AG04450 (cell line): ENCODE measurements at regions of chr4 and their contacts with region 1.

Region 1: GRCh38 chr4:16505726-16506125 is 279.5 kb upstream of the TAPT1 start:
- DNase-seq: no peak
- H3K4me3 ChIP-seq: no peak overlapping the region
- H3K27ac ChIP-seq: no peak overlapping the region
- H3K27me3 ChIP-seq: no peaks in the 10 kb centered on the region
- CTCF ChIP-seq: peak; percentile 42

Region 2: GRCh38 chr4:16516796-16517439 is 11.2 kb after region 1 on chr4:
- CTCF ChIA-PET with region 1: interaction called, 10 read pairs
- POLR2A ChIA-PET with region 1: no interaction called
- DNase-seq: peak; percentile 58
- H3K4me3 ChIP-seq: no peak overlapping the region
- H3K27ac ChIP-seq: no peak overlapping the region
- H3K27me3 ChIP-seq: no peaks in the 10 kb centered on the region
- CTCF ChIP-seq: peak; percentile 56

Region 3: GRCh38 chr4:16585053-16585452 is 79.3 kb after region 1 on chr4:
- CTCF ChIA-PET with region 1: no interaction called
- POLR2A ChIA-PET with region 1: interaction called, 14 read pairs
- DNase-seq: no peak
- H3K4me3 ChIP-seq: no peak overlapping the region
- H3K27ac ChIP-seq: no peak overlapping the region
- H3K27me3 ChIP-seq: no peaks in the 10 kb centered on the region
- CTCF ChIP-seq: no peak